Heart right ventricle (tissue), 16 donors: ENCODE measurements at regions of chr5 and their contacts with region 1.

Region 1: GRCh38 chr5:96734871-96735325 is 72.7 kb downstream of the CAST start:
- DNase-seq: no peak
- ATAC-seq: peak in 5 of 8 donors; percentile 11 to 51 (median 33)
- H3K4me3 ChIP-seq: no peak overlapping the region
- H3K27ac ChIP-seq: peak overlapping the region in 2 of 10 donors; percentile 8 to 12
- H3K4me1 ChIP-seq: peaks cover 0 to 32% (median 13%) of the 10 kb centered on the region in 9 donors
- H3K27me3 ChIP-seq: no peaks in the 10 kb centered on the region
- CTCF ChIP-seq: no peak

Region 2: GRCh38 chr5:96624636-96625035 is 110.3 kb before region 1 on chr5:
- intact Hi-C with region 1: loop called in 3 of 10 experiments (anchors 5 to 10 kb)
- DNase-seq: no peak
- ATAC-seq: no peak
- H3K4me3 ChIP-seq: no peak overlapping the region
- H3K27ac ChIP-seq: no peak overlapping the region
- H3K4me1 ChIP-seq: peaks cover 0 to 12% (median 0%) of the 10 kb centered on the region in 9 donors
- H3K27me3 ChIP-seq: no peaks in the 10 kb centered on the region
- CTCF ChIP-seq: no peak

Region 3: GRCh38 chr5:96844476-96844990 is 109.6 kb after region 1 on chr5:
- intact Hi-C with region 1: no loop called
- DNase-seq: no peak
- ATAC-seq: no peak
- H3K4me3 ChIP-seq: no peak overlapping the region
- H3K27ac ChIP-seq: no peak overlapping the region
- H3K4me1 ChIP-seq: no peaks in the 10 kb centered on the region
- H3K27me3 ChIP-seq: no peaks in the 10 kb centered on the region
- CTCF ChIP-seq: no peak